ENCODE measurements at regions of chr2 and their contacts with region 1.

Region 1: DNA sequence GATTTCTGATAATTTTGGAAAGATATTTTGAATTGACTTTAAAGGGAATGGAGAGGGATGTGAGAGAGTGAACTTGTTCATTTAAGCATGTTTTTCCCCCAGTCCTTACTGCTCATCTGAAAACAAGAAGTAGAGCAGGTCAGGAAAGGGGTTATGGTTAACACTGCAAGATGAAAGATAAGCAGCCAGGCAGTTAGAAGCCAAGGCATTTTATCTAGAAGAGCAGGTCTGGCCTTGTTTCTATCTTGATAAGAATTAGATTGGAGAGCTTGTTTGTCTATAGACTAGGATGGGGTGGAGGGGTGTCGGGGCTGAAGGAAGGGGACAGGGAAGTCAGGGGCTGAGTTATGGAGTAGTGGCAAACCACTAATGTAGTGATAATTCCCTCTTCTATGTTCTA is 171.6 kb downstream of the IKZF2 start:
- DNase-seq: no peak
- H3K4me3 ChIP-seq: no peak overlapping the region
- H3K27ac ChIP-seq: no peak overlapping the region
- H3K4me1 ChIP-seq: no peaks in the 10 kb centered on the region
- CTCF ChIP-seq: no peak

Region 2: DNA sequence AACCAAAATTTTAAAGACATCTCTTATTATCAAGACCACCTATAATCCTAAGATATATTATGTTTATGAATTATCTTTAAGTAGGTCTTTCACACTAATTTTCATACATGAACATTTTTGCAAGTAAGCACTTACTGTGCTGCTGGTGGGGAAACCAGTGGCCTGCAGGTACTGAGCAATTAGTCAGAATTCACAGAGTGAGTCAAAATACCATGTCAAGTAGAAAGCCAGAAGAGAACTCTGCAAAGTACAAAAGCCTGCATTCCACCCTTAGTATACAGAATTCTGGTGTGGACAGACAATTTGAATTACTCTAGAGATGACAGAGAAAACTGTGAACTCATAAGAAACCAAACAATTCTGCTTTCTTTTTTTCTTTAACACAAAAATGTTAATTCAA is 11.5 kb before region 1 on chr2:
- CTCF ChIA-PET with region 1: no interaction called
- POLR2A ChIA-PET with region 1: interaction called, 24 read pairs
- intact Hi-C with region 1: no loop called
- DNase-seq: no peak
- H3K4me3 ChIP-seq: no peak overlapping the region
- H3K27ac ChIP-seq: no peak overlapping the region
- H3K4me1 ChIP-seq: no peaks in the 10 kb centered on the region
- CTCF ChIP-seq: no peak

Region 3: DNA sequence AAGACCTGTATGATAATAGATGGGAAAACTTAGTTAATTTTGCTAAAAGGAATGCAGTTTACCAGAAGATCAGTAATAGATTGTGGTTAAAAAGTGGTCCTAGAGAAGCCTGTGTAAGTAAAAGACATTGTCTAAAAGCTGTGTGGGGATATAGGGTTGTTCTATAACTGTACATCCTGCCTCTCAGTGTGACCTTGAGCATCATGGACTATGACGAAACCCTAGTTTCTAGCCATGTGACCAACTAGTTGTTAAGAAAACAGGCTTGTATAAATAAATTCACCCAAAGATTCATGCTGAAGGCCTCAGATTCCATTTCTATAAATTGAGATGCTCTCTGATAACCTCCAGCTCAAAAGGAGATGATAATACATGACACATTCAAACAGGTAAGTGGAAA is 10.9 kb after region 1 on chr2:
- CTCF ChIA-PET with region 1: interaction called, 3 read pairs
- POLR2A ChIA-PET with region 1: interaction called, 12 read pairs
- intact Hi-C with region 1: no loop called
- DNase-seq: peak; percentile 22
- H3K4me3 ChIP-seq: no peak overlapping the region
- H3K27ac ChIP-seq: no peak overlapping the region
- H3K4me1 ChIP-seq: peaks cover 7% of the 10 kb centered on the region
- CTCF ChIP-seq: no peak

Measured in OCI-LY7 (cell line).